ENCODE measurements at regions of chr13 and their contacts with region 1.

Region 1: GRCh38 chr13:75219479-75220237 is 262.3 kb downstream of the TBC1D4 start:
- DNase-seq: peak; percentile 89
- H3K4me3 Mint-ChIP-seq: peak overlapping the region; percentile 17
- H3K27ac Mint-ChIP-seq: no peak overlapping the region
- H3K4me1 Mint-ChIP-seq: peaks cover 3% of the 10 kb centered on the region
- H3K27me3 Mint-ChIP-seq: peaks cover 31% of the 10 kb centered on the region

Region 2: GRCh38 chr13:73722120-73722519 is 1497.5 kb before region 1 on chr13:
- CTCF ChIA-PET with region 1: interaction called, 3 read pairs
- intact Hi-C with region 1: loop called (anchors 2 kb)
- DNase-seq: peak; percentile 35
- H3K4me3 Mint-ChIP-seq: no peak overlapping the region
- H3K27ac Mint-ChIP-seq: no peak overlapping the region
- H3K4me1 Mint-ChIP-seq: peaks cover 38% of the 10 kb centered on the region
- H3K27me3 Mint-ChIP-seq: no peaks in the 10 kb centered on the region

Region 3: GRCh38 chr13:74575729-74576125 is 643.9 kb before region 1 on chr13:
- CTCF ChIA-PET with region 1: no interaction called
- intact Hi-C with region 1: loop called (anchors 1 kb)
- DNase-seq: peak; percentile 77
- H3K4me3 Mint-ChIP-seq: peak overlapping the region; percentile 69
- H3K27ac Mint-ChIP-seq: no peak overlapping the region
- H3K4me1 Mint-ChIP-seq: peaks cover 10% of the 10 kb centered on the region
- H3K27me3 Mint-ChIP-seq: peaks cover 20% of the 10 kb centered on the region

Region 4: GRCh38 chr13:75181906-75182305 is 37.8 kb before region 1 on chr13:
- CTCF ChIA-PET with region 1: no interaction called
- intact Hi-C with region 1: no loop called
- DNase-seq: no peak
- H3K4me3 Mint-ChIP-seq: no peak overlapping the region
- H3K27ac Mint-ChIP-seq: no peak overlapping the region
- H3K4me1 Mint-ChIP-seq: no peaks in the 10 kb centered on the region
- H3K27me3 Mint-ChIP-seq: peaks cover 21% of the 10 kb centered on the region

Region 5: GRCh38 chr13:75202981-75203380 is 16.7 kb before region 1 on chr13:
- CTCF ChIA-PET with region 1: interaction called, 10 read pairs
- intact Hi-C with region 1: no loop called
- DNase-seq: no peak
- H3K4me3 Mint-ChIP-seq: no peak overlapping the region
- H3K27ac Mint-ChIP-seq: no peak overlapping the region
- H3K4me1 Mint-ChIP-seq: no peaks in the 10 kb centered on the region
- H3K27me3 Mint-ChIP-seq: peaks cover 4% of the 10 kb centered on the region

Region 6: DNA sequence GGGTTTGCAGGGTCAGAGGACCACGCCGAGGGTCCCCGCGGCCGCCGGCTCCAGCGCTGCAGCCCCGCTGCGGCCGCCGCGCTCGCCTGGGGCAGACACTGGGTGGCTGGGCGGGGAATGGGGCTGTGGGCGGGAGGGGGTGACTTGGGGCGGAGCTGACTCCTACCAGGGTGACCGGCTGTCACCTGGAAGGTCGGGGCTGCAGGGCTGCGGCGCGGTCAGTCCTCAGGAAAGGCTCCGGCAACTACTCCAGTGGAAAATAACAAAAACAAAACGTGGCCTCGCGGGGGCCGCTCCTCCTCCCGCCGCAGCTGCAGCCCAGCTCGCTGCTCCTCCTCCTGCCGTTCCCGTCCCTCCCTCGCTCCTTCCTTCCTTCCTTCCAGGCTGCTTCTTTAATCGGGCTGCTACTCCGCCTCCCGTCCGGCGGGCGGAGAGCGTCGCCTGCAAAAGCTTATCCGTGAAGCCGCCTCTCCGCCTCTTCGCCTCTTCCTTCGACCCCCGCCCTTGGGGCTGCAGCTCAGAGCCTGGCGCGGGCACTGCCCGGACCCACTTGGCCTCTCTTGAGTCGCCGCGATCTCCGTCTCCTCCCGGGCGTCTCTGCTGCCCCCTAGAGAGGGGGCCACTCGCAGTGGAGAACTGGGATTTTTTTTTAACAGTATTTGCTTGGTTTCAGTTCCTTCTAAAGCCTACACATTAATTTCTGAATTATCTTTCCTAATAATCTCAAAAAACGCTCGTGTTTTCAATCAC is 262.6 kb after region 1 on chr13 and contains the start of gene TBC1D4:
- CTCF ChIA-PET with region 1: interaction called, 3 read pairs
- intact Hi-C with region 1: loop called (anchors 2 kb)
- DNase-seq: peak; percentile 68
- H3K4me3 Mint-ChIP-seq: peak within 1 kb of the TSS; percentile 94
- H3K27ac Mint-ChIP-seq: no peak within 1 kb of the TSS
- H3K4me1 Mint-ChIP-seq: peaks cover 11% of the 10 kb centered on the region
- H3K27me3 Mint-ChIP-seq: peaks cover 53% of the 10 kb centered on the region
- total RNA-seq, gene TBC1D4: 13.4 to 19.7 TPM

Measured in activated naive CD4-positive, alpha-beta T cell treated with anti-CD3 and anti-CD28 coated beads for 36 hours (primary cell).